ENCODE measurements at regions of chr5 and their contacts with region 1.

Region 1: DNA sequence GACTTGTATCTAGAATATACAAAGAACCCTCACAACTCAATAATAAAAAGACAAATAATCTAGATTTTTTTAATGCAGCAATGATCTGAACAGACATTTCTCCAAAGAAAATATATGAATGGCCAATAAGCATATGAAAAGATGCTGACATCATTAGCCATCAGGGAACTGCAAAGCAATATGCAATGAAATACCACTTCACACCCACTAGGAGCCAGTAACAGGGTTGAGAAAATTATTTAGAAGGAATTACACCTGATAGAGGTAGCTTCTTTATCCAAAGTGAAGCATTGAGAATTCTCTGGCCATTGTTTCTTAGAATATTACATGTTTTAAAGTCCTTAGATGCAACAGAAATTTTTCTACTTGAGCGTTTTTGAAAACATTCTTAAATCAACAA is 316.9 kb downstream of the KCNN2 start:
- DNase-seq: no peak
- ATAC-seq: no peak
- H3K4me3 ChIP-seq: no peak overlapping the region
- H3K27ac ChIP-seq: no peak overlapping the region
- H3K4me1 ChIP-seq: no peaks in the 10 kb centered on the region
- H3K27me3 ChIP-seq: no peaks in the 10 kb centered on the region
- CTCF ChIP-seq: no peak

Region 2: DNA sequence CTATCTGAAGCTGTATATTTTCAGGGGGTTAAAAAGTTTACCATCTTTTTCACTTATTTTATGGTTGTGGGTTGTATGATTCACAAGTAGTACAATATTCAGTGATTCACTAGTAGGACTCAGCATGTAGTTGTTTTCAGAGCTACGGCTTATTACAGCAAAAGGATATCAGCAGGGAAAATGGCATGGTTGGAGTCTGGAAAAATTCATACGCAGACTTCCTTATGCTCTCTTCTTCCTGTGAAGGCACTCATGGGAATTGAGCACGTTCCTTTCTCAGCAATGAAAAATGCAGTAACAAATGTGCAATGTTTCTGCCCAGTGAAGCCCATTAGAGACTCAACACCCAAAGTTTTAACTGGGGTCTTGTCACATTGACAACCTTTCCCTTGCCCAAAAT is 66.4 kb before region 1 on chr5:
- CTCF ChIA-PET with region 1: no interaction called
- POLR2A ChIA-PET with region 1: no interaction called
- intact Hi-C with region 1: no loop called
- DNase-seq: no peak
- ATAC-seq: no peak
- H3K4me3 ChIP-seq: no peak overlapping the region
- H3K27ac ChIP-seq: no peak overlapping the region
- H3K4me1 ChIP-seq: no peaks in the 10 kb centered on the region
- H3K27me3 ChIP-seq: no peaks in the 10 kb centered on the region
- CTCF ChIP-seq: no peak

Region 3: GRCh38 chr5:115016646-115017045 is 337.9 kb after region 1 on chr5:
- CTCF ChIA-PET with region 1: no interaction called
- POLR2A ChIA-PET with region 1: no interaction called
- intact Hi-C with region 1: loop called (anchors 5 kb)
- DNase-seq: no peak
- ATAC-seq: no peak
- H3K4me3 ChIP-seq: no peak overlapping the region
- H3K27ac ChIP-seq: no peak overlapping the region
- H3K4me1 ChIP-seq: no peaks in the 10 kb centered on the region
- H3K27me3 ChIP-seq: no peaks in the 10 kb centered on the region
- CTCF ChIP-seq: no peak